CD4-positive, alpha-beta memory T cell (primary cell): ENCODE measurements at regions of chr7 and their contacts with region 1.

Region 1: DNA sequence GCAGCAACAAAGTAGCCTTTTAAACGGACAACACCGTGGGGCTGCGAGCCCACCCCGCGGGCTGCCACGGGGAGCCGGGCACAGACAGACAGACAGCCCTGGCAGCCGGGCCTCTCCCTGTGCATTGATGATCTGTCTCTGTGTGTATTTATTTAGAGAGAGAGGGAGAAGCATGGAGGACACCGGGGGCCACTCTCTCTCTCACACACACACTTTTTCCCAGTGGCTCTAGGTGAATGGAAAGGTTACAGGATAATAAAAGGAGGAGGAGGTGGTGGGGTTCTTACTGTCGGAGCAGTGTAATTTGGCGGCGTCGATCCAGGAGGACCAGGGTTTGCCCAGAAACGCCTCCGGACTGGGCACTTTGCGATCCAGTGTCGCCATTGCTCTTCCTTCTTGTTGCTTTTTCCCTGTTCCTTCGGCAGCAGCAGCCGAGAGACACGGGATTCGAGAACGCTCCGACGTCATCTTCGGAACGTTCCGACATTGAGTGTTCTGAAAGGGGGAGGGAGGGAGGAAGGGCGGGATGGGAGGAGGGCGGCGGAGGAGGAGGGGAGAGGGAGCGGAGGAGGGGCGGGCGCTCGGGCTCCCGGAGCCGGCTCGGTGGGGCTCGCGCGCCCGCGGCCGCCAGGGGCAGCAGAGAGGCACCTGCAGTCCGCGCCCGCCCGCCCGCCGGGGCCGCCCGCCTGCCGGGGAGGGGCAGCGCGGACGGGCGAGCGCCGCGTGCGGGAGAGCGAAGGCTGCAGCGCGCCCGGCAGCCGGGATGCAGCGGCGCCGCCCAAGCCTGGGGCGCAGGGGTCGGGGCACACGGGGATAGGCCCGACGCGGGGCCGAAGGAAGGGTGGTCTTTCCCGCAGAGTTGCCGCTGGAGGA is at the start of gene ATXN7L1:
- DNase-seq: peak; percentile 85 to 90 (median 86)
- H3K4me3 ChIP-seq: peak within 1 kb of the TSS; percentile 78 to 92
- H3K4me3 Mint-ChIP-seq: peak within 1 kb of the TSS; percentile 95 to 100 (median 98)
- H3K27ac ChIP-seq: peak within 1 kb of the TSS; percentile 82
- H3K27ac Mint-ChIP-seq: peak within 1 kb of the TSS; percentile 83 to 99 (median 96)
- H3K4me1 ChIP-seq: peaks cover 52% of the 10 kb centered on the region
- H3K4me1 Mint-ChIP-seq: peaks cover 43 to 63% (median 51%) of the 10 kb centered on the region in 4 donors
- H3K27me3 ChIP-seq: no peaks in the 10 kb centered on the region
- H3K27me3 Mint-ChIP-seq: no peaks in the 10 kb centered on the region
- total RNA-seq, gene ATXN7L1: 60.4 to 62.2 TPM

Region 2: GRCh38 chr7:105309235-105310169 is 566.8 kb before region 1 on chr7:
- CTCF ChIA-PET with region 1: no interaction called
- POLR2A ChIA-PET with region 1: no interaction called
- intact Hi-C with region 1: no loop called
- DNase-seq: peak in 1 of 5 donors; percentile 39
- H3K4me3 ChIP-seq: no peak overlapping the region
- H3K4me3 Mint-ChIP-seq: peak overlapping the region in 5 of 8 donors; percentile 11 to 39 (median 27)
- H3K27ac ChIP-seq: no peak overlapping the region
- H3K27ac Mint-ChIP-seq: peak overlapping the region in 4 of 7 donors; percentile 0 to 28 (median 13)
- H3K4me1 ChIP-seq: peaks cover 60% of the 10 kb centered on the region
- H3K4me1 Mint-ChIP-seq: peaks cover 46 to 61% (median 53%) of the 10 kb centered on the region in 4 donors
- H3K27me3 ChIP-seq: no peaks in the 10 kb centered on the region
- H3K27me3 Mint-ChIP-seq: no peaks in the 10 kb centered on the region

Region 3: DNA sequence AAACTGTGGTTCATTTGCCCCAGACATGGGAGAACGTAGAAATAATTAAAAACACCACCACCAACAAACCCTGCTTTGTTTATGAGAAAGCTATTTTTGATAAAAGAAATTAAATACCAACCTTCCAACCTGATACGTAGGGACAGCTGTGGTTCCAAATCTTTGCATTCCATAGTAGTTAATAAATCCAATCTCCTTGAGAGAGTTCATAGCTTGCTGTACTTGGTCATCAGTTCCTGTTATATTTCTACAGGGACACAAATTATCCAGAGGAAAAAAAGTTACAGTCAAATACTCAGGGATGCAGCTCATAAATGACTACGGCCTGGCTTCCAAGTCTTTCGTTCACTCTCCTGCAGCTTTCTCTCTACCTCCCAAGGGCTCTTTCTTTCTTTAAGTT is 395.4 kb before region 1 on chr7:
- CTCF ChIA-PET with region 1: no interaction called
- POLR2A ChIA-PET with region 1: no interaction called
- intact Hi-C with region 1: no loop called
- DNase-seq: no peak
- H3K4me3 ChIP-seq: no peak overlapping the region
- H3K4me3 Mint-ChIP-seq: no peak overlapping the region
- H3K27ac ChIP-seq: no peak overlapping the region
- H3K27ac Mint-ChIP-seq: no peak overlapping the region
- H3K4me1 ChIP-seq: peaks cover 5% of the 10 kb centered on the region
- H3K4me1 Mint-ChIP-seq: peaks cover 0 to 5% (median 2%) of the 10 kb centered on the region in 4 donors
- H3K27me3 ChIP-seq: no peaks in the 10 kb centered on the region
- H3K27me3 Mint-ChIP-seq: no peaks in the 10 kb centered on the region

Region 4: GRCh38 chr7:105808703-105809590 is 67.4 kb before region 1 on chr7:
- CTCF ChIA-PET with region 1: interaction called, 20 read pairs
- POLR2A ChIA-PET with region 1: interaction called, 9 read pairs
- intact Hi-C with region 1: loop called (anchors 1 kb)
- DNase-seq: peak; percentile 60 to 81 (median 62)
- H3K4me3 ChIP-seq: peak overlapping the region in 1 of 2 donors; percentile 30
- H3K4me3 Mint-ChIP-seq: peak overlapping the region; percentile 2 to 88 (median 55)
- H3K27ac ChIP-seq: peak overlapping the region; percentile 60
- H3K27ac Mint-ChIP-seq: peak overlapping the region; percentile 52 to 92 (median 80)
- H3K4me1 ChIP-seq: peaks cover 56% of the 10 kb centered on the region
- H3K4me1 Mint-ChIP-seq: peaks cover 45 to 65% (median 54%) of the 10 kb centered on the region in 4 donors
- H3K27me3 ChIP-seq: no peaks in the 10 kb centered on the region
- H3K27me3 Mint-ChIP-seq: no peaks in the 10 kb centered on the region

Region 5: GRCh38 chr7:105896407-105896911 is 20.1 kb after region 1 on chr7:
- CTCF ChIA-PET with region 1: interaction called, 14 read pairs
- POLR2A ChIA-PET with region 1: interaction called, 8 read pairs
- intact Hi-C with region 1: loop called (anchors 2 kb)
- DNase-seq: peak in 3 of 5 donors; percentile 15 to 24 (median 20)
- H3K4me3 ChIP-seq: no peak overlapping the region
- H3K4me3 Mint-ChIP-seq: no peak overlapping the region
- H3K27ac ChIP-seq: no peak overlapping the region
- H3K27ac Mint-ChIP-seq: peak overlapping the region in 4 of 7 donors; percentile 30 to 69 (median 48)
- H3K4me1 ChIP-seq: peaks cover 27% of the 10 kb centered on the region
- H3K4me1 Mint-ChIP-seq: peaks cover 24 to 48% (median 26%) of the 10 kb centered on the region in 4 donors
- H3K27me3 ChIP-seq: no peaks in the 10 kb centered on the region
- H3K27me3 Mint-ChIP-seq: no peaks in the 10 kb centered on the region

Region 6: GRCh38 chr7:106009403-106010226 is 133.3 kb after region 1 on chr7:
- CTCF ChIA-PET with region 1: interaction called, 13 read pairs
- POLR2A ChIA-PET with region 1: interaction called, 3 read pairs
- intact Hi-C with region 1: loop called (anchors 1 kb)
- DNase-seq: peak; percentile 77 to 83 (median 78)
- H3K4me3 ChIP-seq: no peak overlapping the region
- H3K4me3 Mint-ChIP-seq: peak overlapping the region in 4 of 8 donors; percentile 34 to 64 (median 48)
- H3K27ac ChIP-seq: no peak overlapping the region
- H3K27ac Mint-ChIP-seq: peak overlapping the region in 6 of 7 donors; percentile 64 to 85 (median 74)
- H3K4me1 ChIP-seq: peaks cover 23% of the 10 kb centered on the region
- H3K4me1 Mint-ChIP-seq: peaks cover 18 to 28% (median 24%) of the 10 kb centered on the region in 4 donors
- H3K27me3 ChIP-seq: no peaks in the 10 kb centered on the region
- H3K27me3 Mint-ChIP-seq: no peaks in the 10 kb centered on the region

Region 7: GRCh38 chr7:106041140-106041717 is 164.9 kb after region 1 on chr7:
- CTCF ChIA-PET with region 1: interaction called, 6 read pairs
- POLR2A ChIA-PET with region 1: no interaction called
- intact Hi-C with region 1: loop called (anchors 2 kb)
- DNase-seq: peak in 2 of 5 donors; percentile 19 to 30
- H3K4me3 ChIP-seq: no peak overlapping the region
- H3K4me3 Mint-ChIP-seq: peak overlapping the region in 2 of 8 donors; percentile 6 to 59
- H3K27ac ChIP-seq: no peak overlapping the region
- H3K27ac Mint-ChIP-seq: peak overlapping the region in 4 of 7 donors; percentile 0 to 74 (median 30)
- H3K4me1 ChIP-seq: peaks cover 26% of the 10 kb centered on the region
- H3K4me1 Mint-ChIP-seq: peaks cover 15 to 32% (median 25%) of the 10 kb centered on the region in 4 donors
- H3K27me3 ChIP-seq: no peaks in the 10 kb centered on the region
- H3K27me3 Mint-ChIP-seq: peaks cover 2 to 6% of the 10 kb centered on the region in 2 donors